ENCODE measurements at regions of chr20 and their contacts with region 1.

Region 1: DNA sequence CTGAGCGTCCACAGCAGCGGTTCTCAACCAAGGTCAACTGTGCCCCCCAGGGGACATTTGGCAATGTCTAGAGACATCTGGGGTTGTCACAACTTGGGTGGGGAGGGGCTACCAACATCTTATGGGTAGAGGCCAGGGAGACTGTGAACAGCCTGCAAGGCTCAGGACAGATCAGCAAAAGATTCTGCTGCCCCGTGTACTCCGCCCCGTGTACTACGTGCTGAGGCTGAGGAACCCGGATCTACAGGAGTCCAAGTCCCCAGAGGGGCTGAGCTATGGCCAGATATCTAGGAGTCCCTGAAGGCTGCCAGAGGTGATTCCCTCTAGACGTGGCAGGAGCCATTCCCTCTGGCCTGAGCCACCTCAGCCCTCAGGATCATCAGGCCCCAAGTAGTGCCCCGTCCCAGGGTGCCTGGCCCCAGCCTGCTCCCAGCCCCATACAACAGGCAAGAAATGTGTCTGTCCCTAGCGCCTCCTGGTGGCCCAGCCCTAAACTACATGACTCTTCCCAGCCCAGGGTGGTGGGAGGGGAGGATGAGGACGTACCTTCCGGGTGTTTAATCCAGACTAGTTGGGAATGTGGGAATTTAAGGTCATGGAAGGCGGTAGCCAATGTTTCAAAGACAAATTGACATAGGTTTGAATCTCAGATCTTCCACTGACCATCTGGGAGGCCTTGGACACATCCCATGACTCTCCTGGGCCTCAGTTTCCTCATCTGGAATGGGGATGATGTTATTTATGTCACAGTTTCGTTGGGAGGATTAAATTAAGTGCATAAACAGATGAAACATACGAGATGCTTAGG is 49.5 kb upstream of the PTPN1 start:
- DNase-seq: peak; percentile 70 to 90
- H3K4me3 ChIP-seq: no peak overlapping the region
- H3K27ac ChIP-seq: no peak overlapping the region
- H3K4me1 ChIP-seq: peaks cover 43% of the 10 kb centered on the region
- H3K27me3 ChIP-seq: no peaks in the 10 kb centered on the region
- CTCF ChIP-seq: peak; percentile 99

Region 2: DNA sequence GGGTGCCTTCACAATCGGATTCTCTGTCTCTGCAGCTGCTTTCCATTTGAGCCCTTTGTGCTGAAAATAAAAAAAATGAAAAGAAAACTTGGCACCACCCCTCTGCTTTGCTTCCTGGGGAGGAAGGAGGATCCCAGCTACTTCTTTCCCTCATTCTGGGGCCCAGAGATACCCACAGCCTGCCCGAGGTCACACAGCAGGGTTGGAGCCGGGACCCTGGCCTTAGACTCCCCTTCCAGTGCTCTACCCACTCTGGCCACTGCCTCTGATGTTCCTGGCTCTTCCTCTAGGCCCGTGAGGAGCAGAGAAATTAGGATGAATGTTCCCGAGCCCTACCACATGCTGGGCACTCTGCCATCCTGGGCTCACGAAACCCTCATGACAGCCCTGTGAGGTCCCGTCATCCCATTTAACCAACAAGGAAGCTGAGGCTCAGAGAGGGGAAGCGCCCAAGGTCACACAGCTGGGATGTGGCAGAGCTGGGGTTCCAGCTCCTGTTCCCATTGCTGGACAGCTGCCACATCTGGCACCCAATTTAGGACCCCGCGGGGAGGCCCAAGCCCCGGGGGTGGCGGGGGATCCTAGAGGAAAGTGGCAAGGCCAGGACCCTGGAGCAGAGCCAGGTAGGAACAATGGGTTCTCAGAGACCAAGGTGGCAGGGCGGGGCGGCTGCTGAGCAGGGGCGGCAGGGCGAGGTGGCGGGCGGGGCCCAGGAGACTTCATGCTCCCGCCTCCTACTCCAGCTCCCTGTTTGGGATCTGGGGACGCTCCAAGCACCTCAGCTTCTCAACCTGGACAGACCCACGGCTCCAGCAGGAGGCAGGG is 193.4 kb before region 1 on chr20:
- CTCF ChIA-PET with region 1: no interaction called
- POLR2A ChIA-PET with region 1: no interaction called
- intact Hi-C with region 1: loop called (anchors 5 kb)
- DNase-seq: peak; percentile 90 to 93
- H3K4me3 ChIP-seq: no peak overlapping the region; the same call in 1 of the 2 replicates
- H3K27ac ChIP-seq: peak overlapping the region; percentile 84
- H3K4me1 ChIP-seq: peaks cover 45% of the 10 kb centered on the region
- H3K27me3 ChIP-seq: no peaks in the 10 kb centered on the region
- CTCF ChIP-seq: peak; percentile 52; the same call in 1 of the 2 replicates

Region 3: GRCh38 chr20:50367104-50367674 is 93.5 kb before region 1 on chr20:
- CTCF ChIA-PET with region 1: interaction called, 17 read pairs
- POLR2A ChIA-PET with region 1: no interaction called
- intact Hi-C with region 1: loop called (anchors 5 kb)
- DNase-seq: no peak
- H3K4me3 ChIP-seq: no peak overlapping the region
- H3K27ac ChIP-seq: peak overlapping the region; percentile 30
- H3K4me1 ChIP-seq: peaks cover 34% of the 10 kb centered on the region
- H3K27me3 ChIP-seq: no peaks in the 10 kb centered on the region
- CTCF ChIP-seq: no peak

Region 4: GRCh38 chr20:50415516-50416113 is 45.0 kb before region 1 on chr20:
- CTCF ChIA-PET with region 1: no interaction called
- POLR2A ChIA-PET with region 1: no interaction called
- intact Hi-C with region 1: loop called (anchors 2 kb)
- DNase-seq: peak; percentile 85 to 97
- H3K4me3 ChIP-seq: peak overlapping the region; percentile 27; the same call in 1 of the 2 replicates
- H3K27ac ChIP-seq: peak overlapping the region; percentile 90
- H3K4me1 ChIP-seq: peaks cover 64% of the 10 kb centered on the region
- H3K27me3 ChIP-seq: no peaks in the 10 kb centered on the region
- CTCF ChIP-seq: no peak; the same call in 1 of the 2 replicates

Region 5: GRCh38 chr20:50438986-50439407 is 21.7 kb before region 1 on chr20:
- CTCF ChIA-PET with region 1: no interaction called
- POLR2A ChIA-PET with region 1: no interaction called
- intact Hi-C with region 1: no loop called
- DNase-seq: peak; percentile 90 to 98
- H3K4me3 ChIP-seq: no peak overlapping the region
- H3K27ac ChIP-seq: peak overlapping the region; percentile 93
- H3K4me1 ChIP-seq: peaks cover 56% of the 10 kb centered on the region
- H3K27me3 ChIP-seq: no peaks in the 10 kb centered on the region
- CTCF ChIP-seq: no peak

Region 6: DNA sequence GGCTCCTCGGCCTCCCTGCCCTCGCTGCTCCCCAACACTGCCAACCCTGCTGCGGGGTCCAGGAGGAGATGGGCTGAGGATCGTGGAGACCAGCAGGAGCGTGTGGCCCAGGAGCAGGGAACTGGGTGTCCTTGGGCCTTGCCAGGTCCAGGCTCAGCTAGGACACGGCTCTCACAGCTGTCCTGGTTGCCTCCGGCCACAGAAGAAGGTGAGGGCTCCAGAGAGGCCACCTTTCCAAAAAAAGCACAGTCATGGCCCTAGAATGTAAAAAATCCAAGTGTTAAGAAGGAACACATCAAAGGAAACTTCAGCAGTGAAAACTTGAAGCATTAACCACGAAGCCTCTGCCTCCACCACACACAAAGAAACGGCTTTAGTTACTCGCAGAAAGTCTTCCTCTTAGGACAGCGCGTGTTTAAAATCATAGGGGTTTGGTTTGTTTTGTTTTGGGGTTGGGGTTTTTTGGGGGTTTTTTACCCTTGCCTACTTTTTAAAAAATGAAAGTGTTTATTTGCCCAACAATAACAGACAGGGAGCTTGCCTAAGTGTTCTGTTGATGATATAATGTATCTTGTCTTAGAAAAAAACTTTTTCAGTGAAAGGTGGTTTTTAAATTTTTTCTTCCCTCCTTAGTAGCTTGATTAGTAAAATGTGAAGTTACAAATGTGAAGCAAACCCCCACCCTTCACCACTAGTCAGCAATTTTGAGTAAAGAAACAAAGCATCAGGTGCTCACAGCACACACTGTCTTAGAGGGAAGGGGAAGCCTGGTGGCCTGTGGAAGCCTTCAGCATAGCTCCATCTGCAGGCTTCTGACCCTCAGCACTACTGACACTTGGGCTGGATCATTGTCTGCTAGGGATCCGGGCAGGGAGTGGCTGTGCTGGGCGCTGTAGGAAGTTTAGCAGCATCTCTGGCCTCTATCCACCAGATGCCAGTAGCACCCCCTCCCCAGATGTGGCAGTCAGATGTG is 109.5 kb after region 1 on chr20:
- CTCF ChIA-PET with region 1: no interaction called
- POLR2A ChIA-PET with region 1: no interaction called
- intact Hi-C with region 1: loop called (anchors 2 kb)
- DNase-seq: peak in 1 of 2 experiments; percentile 20
- H3K4me3 ChIP-seq: no peak overlapping the region
- H3K27ac ChIP-seq: no peak overlapping the region
- H3K4me1 ChIP-seq: no peaks in the 10 kb centered on the region
- H3K27me3 ChIP-seq: no peaks in the 10 kb centered on the region
- CTCF ChIP-seq: peak; percentile 41; the same call in 1 of the 2 replicates